ENCODE measurements at regions of chr17 and their contacts with region 1.

Region 1: GRCh38 chr17:11212792-11213191 is 28.2 kb upstream of the SHISA6 start:
- DNase-seq: no peak
- H3K4me3 ChIP-seq: no peak overlapping the region
- H3K27ac ChIP-seq: no peak overlapping the region
- H3K4me1 ChIP-seq: no peaks in the 10 kb centered on the region
- H3K27me3 ChIP-seq: no peaks in the 10 kb centered on the region
- CTCF ChIP-seq: no peak
- EP300 ChIP-seq: no peak
- POLR2A ChIP-seq: no peak

Region 2: GRCh38 chr17:10130263-10130662 is 1082.5 kb before region 1 on chr17:
- in situ Hi-C with region 1: no loop called
- intact Hi-C with region 1: loop called (anchors 5 kb)
- DNase-seq: no peak
- H3K4me3 ChIP-seq: no peak overlapping the region
- H3K27ac ChIP-seq: no peak overlapping the region
- H3K4me1 ChIP-seq: peaks cover 0 to 13% (median 9%) of the 10 kb centered on the region in 4 donors
- H3K27me3 ChIP-seq: no peaks in the 10 kb centered on the region
- CTCF ChIP-seq: no peak
- EP300 ChIP-seq: no peak
- POLR2A ChIP-seq: no peak

Measured in transverse colon (tissue), 4 donors.